ENCODE measurements at regions of chr6 and their contacts with region 1.

Region 1: GRCh38 chr6:152669895-152670294 is 27.8 kb upstream of the MYCT1 start:
- DNase-seq: peak; percentile 67
- H3K4me3 ChIP-seq: no peak overlapping the region
- H3K27ac ChIP-seq: no peak overlapping the region
- H3K4me1 ChIP-seq: peaks cover 44% of the 10 kb centered on the region
- H3K27me3 ChIP-seq: no peaks in the 10 kb centered on the region
- CTCF ChIP-seq: peak; percentile 8 to 22
- POLR2A ChIP-seq: no peak

Region 2: DNA sequence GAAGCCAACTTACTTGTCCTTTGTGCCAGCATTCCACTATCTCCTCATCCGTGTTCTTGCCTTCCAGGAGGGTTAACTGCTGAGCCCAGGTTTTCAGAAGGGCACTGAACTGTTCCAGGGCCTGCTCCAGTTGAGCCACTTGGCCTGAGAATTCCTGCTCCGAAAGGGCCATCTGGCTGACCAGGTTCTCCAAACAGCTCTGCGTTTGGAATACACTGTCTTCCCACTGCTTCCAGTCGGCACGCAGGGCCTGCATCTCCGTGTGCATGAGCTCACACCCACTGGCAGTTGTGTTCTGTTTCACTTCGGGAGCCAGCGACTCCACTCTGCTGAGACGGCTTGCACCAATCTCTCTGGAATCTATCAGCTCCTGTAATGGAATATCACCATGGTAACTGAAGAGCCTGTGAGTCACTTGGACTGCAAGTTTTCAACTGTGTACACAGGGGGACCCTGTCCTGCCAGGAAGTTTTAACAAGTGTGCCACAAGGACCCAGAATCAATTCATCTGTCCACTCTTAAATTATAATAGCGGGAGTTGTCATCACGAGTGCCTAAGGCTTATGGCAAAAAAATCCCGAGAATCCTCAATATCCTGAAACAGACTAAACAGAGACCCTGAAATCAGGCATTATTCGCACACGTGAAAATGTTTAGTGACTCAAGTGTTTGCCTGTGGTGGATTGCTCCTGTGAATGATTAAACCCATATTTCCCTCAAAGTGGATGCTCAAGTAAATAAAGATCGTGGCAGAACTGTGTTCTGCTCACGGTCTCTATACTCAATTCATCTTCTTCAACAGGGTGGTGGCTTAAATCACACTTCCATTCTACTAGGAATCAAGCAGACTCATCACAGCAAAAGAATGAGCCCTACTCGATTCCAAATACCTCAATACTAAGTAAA is 288.6 kb before region 1 on chr6:
- CTCF ChIA-PET with region 1: no interaction called
- POLR2A ChIA-PET with region 1: no interaction called
- dilution Hi-C with region 1: no loop called
- intact Hi-C with region 1: loop called (anchors 2 kb)
- DNase-seq: peak; percentile 95
- H3K4me3 ChIP-seq: peak overlapping the region; percentile 50 to 84 (median 53)
- H3K27ac ChIP-seq: peak overlapping the region; percentile 96
- H3K4me1 ChIP-seq: peaks cover 23% of the 10 kb centered on the region
- H3K27me3 ChIP-seq: no peaks in the 10 kb centered on the region
- CTCF ChIP-seq: no peak
- POLR2A ChIP-seq: no peak

Region 3: DNA sequence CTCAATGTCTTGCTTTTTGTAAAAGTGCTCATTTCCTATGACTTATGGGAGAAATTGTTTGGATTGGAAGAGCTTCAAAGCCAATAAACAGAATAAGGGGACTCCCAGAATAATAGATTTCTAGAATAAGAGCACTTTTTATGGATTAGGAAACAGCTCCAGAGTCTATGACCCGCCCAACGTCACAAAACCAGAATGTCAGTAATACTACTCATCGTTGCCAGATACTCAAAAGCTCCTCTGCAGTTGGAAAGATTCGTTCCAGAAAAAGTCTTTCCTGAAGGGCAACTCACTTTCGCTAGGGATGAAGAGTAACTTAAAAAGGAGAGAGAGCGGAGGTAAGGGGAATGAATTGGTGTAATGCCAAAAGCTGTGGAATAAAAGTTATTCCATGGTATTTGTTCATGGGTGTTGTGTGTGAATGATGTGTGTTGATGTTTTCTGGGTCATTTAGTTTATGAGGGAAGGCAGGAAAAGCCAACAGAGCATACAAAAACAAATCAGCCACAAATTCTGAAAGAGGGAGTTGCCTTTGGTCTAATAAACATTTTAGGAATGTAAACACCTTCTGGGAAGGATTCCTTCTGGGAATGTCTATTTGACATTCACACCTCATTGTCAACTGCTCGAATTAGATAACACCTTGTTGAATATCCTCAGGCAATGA is 97.4 kb before region 1 on chr6:
- CTCF ChIA-PET with region 1: interaction called, 5 read pairs
- POLR2A ChIA-PET with region 1: no interaction called
- dilution Hi-C with region 1: no loop called
- intact Hi-C with region 1: loop called (anchors 1 kb)
- DNase-seq: peak; percentile 78
- H3K4me3 ChIP-seq: no peak overlapping the region
- H3K27ac ChIP-seq: no peak overlapping the region
- H3K4me1 ChIP-seq: peaks cover 19% of the 10 kb centered on the region
- H3K27me3 ChIP-seq: peaks cover 0 to 12% of the 10 kb centered on the region in 2 experiments
- CTCF ChIP-seq: no peak
- POLR2A ChIP-seq: no peak

Region 4: DNA sequence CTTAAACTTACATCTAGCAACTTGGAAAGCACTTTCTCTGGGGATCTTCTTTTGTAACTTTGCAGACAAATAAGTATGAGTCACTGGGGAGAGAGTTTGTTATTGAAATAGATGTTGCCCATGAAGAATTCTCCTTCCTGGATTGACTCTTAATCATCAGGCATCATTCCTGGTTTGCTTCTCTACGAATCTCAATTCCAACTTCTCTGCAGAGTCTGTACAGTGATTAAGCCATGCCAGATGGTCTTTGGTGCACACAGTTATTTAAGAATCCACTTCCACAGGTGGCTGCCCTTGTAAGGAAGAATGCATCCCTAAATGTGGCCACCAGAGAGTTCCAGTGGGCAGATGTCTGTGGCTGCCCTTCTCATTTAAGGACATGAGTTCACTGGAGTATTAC is 53.5 kb after region 1 on chr6:
- CTCF ChIA-PET with region 1: interaction called, 5 read pairs
- POLR2A ChIA-PET with region 1: no interaction called
- dilution Hi-C with region 1: no loop called
- intact Hi-C with region 1: loop called (anchors 1 kb)
- DNase-seq: peak; percentile 27
- H3K4me3 ChIP-seq: no peak overlapping the region
- H3K27ac ChIP-seq: peak overlapping the region; percentile 45
- H3K4me1 ChIP-seq: peaks cover 43% of the 10 kb centered on the region
- H3K27me3 ChIP-seq: no peaks in the 10 kb centered on the region
- CTCF ChIP-seq: no peak
- POLR2A ChIP-seq: no peak